Naive thymus-derived CD4-positive, alpha-beta T cell (primary cell): ENCODE measurements at regions of chr17 and their contacts with region 1.

Region 1: GRCh38 chr17:52096056-52096455 is 62.5 kb downstream of the CA10 start:
- DNase-seq: no peak
- ATAC-seq: no peak
- H3K4me3 ChIP-seq: no peak overlapping the region
- H3K4me3 Mint-ChIP-seq: no peak overlapping the region
- H3K27ac ChIP-seq: no peak overlapping the region
- H3K27ac Mint-ChIP-seq: no peak overlapping the region
- H3K4me1 ChIP-seq: no peaks in the 10 kb centered on the region
- H3K4me1 Mint-ChIP-seq: no peaks in the 10 kb centered on the region
- H3K27me3 ChIP-seq: no peaks in the 10 kb centered on the region
- H3K27me3 Mint-ChIP-seq: peaks cover 0 to 7% (median 0%) of the 10 kb centered on the region in 5 donors

Region 2: GRCh38 chr17:52035336-52035915 is 60.6 kb before region 1 on chr17:
- CTCF ChIA-PET with region 1: no interaction called
- POLR2A ChIA-PET with region 1: no interaction called
- intact Hi-C with region 1: loop called in 1 of 2 experiments (anchors 10 kb)
- DNase-seq: no peak
- ATAC-seq: no peak
- H3K4me3 ChIP-seq: no peak overlapping the region
- H3K4me3 Mint-ChIP-seq: no peak overlapping the region
- H3K27ac ChIP-seq: no peak overlapping the region
- H3K27ac Mint-ChIP-seq: no peak overlapping the region
- H3K4me1 ChIP-seq: no peaks in the 10 kb centered on the region
- H3K4me1 Mint-ChIP-seq: no peaks in the 10 kb centered on the region
- H3K27me3 ChIP-seq: no peaks in the 10 kb centered on the region
- H3K27me3 Mint-ChIP-seq: peaks cover 0 to 9% (median 5%) of the 10 kb centered on the region in 5 donors